Dorsolateral prefrontal cortex (tissue), 120 donors: ENCODE measurements at regions of chr12 and their contacts with region 1.

Region 1: DNA sequence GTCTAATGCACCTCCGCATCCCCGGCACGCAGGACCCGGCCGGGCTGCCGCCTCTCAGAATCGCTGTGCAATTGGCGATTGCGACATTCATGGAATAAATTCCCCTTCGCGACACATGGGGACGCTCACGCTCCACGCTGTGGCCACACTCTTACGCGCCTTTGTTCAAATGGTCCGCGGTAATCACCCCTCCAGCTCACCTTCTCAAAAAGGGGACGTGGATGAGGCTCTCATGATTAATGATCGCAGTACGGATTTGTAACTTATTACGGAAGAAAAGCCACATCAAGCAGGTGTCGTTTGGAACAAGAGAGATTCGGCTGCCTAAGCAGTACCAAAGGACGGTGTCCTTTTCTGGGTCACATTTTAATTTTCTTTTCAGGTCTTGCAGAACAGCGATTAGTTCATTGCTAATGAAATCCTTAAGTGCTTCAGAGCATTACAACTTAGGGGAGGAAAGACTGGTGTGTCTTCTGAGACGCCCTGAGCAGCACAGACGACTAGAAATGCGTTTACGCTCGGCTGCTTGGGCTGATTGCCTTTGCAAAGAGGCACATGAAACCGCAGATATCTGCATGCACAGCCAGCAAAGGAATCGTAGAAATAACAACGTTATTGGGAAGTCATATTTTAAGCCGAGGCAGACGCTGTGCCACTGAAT is 37.3 kb upstream of the ADGRD1 start:
- DNase-seq: peak in 9 of 10 donors; percentile 47 to 79 (median 62)
- H3K4me3 ChIP-seq: peak overlapping the region in 57 of 59 donors; percentile 7 to 66 (median 45)
- H3K27ac ChIP-seq: peak overlapping the region in 5 of 59 donors; percentile 6 to 73 (median 30)
- H3K27me3 ChIP-seq: peaks cover 0 to 4% (median 0%) of the 10 kb centered on the region in 45 donors
- CTCF ChIP-seq: peak; percentile 76 to 98 (median 91)

Region 2: GRCh38 chr12:130881046-130881445 is 35.3 kb before region 1 on chr12:
- intact Hi-C with region 1: no loop called
- DNase-seq: no peak
- H3K4me3 ChIP-seq: no peak overlapping the region
- H3K27ac ChIP-seq: no peak overlapping the region
- H3K27me3 ChIP-seq: no peaks in the 10 kb centered on the region
- CTCF ChIP-seq: no peak

Region 3: DNA sequence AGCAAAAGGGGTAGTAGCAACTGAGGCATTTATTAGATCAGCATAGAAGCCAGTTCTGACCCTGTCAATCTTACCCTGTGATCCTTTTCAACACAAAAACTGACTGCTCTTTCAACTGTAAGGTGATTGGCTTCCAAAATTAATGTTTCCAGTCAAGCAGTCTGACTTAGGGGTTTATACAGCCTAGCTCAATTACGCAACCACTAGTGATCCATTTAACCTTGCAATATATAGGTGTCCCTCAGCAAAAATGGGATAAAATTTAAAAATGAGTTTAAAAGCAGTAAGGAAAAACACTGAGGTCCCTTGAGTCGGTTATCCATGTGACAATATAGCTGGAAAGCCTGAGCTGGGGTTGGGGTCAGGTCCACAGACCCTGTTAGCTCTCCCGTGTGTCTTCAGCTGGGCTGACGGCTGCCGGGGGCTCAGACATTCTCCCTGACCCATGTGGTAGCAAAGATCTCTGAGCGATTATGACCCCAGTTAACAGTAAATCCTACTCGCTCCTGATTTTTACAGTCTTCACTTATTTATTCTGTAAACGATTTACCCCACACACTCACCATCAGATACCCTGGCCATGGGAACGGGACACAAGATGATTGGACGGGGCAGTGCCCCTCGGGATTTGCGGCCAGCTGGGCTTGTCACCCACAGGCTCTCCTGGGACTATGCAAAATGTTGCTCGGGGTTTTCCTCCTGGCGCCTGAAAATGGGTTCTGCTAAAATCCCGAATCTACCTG is 54.0 kb after region 1 on chr12:
- intact Hi-C with region 1: no loop called
- DNase-seq: no peak
- H3K4me3 ChIP-seq: no peak overlapping the region
- H3K27ac ChIP-seq: no peak overlapping the region
- H3K27me3 ChIP-seq: no peaks in the 10 kb centered on the region
- CTCF ChIP-seq: no peak

Region 4: DNA sequence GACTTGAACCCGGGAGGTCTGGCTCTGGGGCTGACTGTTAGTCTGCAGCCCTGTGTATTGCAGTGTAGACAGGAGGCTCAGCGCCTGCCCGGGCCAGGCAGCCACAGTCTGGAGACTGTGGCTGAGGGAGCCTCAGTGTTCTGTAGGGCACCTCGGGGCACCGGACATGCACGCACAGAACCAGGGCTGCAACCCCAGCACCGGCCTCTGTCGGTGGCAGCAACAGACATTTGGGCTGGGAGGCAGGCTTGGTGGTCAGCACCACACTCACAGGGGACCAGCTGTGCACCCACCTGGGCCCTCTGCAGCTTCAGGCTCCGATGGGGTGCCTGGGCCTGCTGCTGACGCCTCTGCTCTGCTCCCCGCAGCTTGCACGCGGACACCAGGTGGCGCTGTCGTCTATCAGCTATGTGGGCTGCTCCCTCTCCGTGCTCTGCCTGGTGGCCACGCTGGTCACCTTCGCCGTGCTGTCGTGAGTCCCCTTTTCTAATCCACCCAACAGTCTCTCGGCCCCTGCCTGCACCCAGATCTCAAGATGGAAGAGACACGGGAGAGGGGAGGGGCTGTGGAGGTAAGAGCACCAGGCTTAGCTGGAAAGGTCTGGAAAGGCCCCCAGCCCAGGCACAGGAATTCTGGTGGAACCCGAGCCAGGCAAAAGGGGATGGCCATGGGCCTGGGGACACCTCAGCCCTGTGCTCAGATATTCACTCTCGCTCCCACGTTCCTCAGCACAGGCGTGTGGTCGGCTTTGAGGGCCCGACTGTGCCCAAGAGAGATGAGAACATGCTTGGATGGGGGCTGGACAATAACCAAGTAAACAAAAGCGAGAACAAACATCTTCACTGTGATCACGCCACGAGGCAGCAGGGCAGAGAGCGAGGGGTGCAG is 188.3 kb after region 1 on chr12:
- intact Hi-C with region 1: loop called in 1 of 2 experiments (anchors 10 kb)
- DNase-seq: peak; percentile 74 to 94 (median 90)
- H3K4me3 ChIP-seq: peak overlapping the region in 5 of 59 donors; percentile 10 to 28 (median 21)
- H3K27ac ChIP-seq: peak overlapping the region in 52 of 59 donors; percentile 20 to 88 (median 68)
- H3K27me3 ChIP-seq: peaks cover 0 to 3% (median 0%) of the 10 kb centered on the region in 45 donors
- CTCF ChIP-seq: peak; percentile 78 to 99 (median 96)

Region 5: DNA sequence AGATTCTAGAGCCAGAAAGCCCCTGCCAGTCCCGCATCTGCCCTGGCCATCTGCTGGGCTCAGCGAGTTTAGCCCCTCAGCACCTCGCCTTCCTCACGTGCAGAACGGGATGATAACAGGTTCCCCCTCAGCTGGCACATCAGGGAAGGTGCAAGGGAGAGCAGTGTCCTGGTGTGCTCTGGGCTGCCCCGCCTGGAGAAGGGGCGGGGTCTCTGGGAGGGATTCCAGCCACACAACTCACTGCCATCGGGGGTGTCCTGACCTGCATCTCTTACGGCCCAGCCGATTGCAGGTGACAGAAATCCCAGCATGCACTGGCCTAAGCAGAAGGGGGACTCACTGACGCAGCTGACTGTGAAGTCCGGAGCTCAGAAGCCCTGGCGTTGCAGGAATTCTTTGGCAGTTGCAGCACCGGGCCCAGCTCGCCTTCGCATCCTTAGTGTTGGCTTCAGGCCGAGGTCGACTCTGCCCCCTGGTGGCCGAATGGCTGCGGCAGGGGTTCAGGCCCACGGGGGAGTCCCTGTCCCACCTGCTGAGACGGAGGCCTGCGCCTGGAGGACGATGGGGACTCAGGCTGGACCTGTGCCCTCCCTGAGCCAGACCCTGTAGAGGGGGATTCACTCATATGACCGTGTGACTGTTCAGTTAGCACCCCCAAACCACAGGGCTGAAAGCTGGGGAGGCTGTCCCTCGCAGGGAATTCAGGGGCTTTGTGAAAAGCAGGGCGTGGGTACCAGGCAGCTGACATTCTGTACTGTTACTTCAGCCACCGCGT is 215.9 kb after region 1 on chr12:
- intact Hi-C with region 1: loop called (anchors 5 to 10 kb)
- DNase-seq: peak in 9 of 10 donors; percentile 34 to 77 (median 67)
- H3K4me3 ChIP-seq: peak overlapping the region in 7 of 59 donors; percentile 2 to 48 (median 19)
- H3K27ac ChIP-seq: peak overlapping the region in 51 of 59 donors; percentile 13 to 86 (median 57)
- H3K27me3 ChIP-seq: no peaks in the 10 kb centered on the region
- CTCF ChIP-seq: peak; percentile 51 to 91 (median 80)

Region 6: DNA sequence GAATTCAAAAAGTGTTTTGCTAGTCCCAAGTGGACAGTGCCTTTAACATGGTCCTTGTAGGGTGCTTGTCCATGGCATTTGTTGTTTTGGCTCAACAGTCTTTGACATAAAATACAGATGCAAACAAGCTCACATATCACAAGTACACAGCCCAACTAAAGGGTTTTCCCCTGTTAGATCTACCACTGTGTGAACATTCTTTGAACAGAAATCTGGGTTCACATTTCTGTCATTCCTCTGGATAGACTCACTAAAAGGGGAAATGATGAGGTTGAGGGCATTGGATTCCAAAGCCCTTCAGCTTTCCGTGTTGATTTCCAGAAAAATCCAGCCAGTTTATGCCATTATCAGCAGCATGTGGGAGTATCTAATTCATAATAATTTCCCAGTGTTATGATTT is 1087.5 kb after region 1 on chr12:
- intact Hi-C with region 1: loop called (anchors 2 to 10 kb)
- DNase-seq: no peak
- H3K4me3 ChIP-seq: no peak overlapping the region
- H3K27ac ChIP-seq: no peak overlapping the region
- H3K27me3 ChIP-seq: no peaks in the 10 kb centered on the region
- CTCF ChIP-seq: no peak